ENCODE measurements at regions of chr13 and their contacts with region 1.

Region 1: GRCh38 chr13:94362411-94362909 is 117.0 kb downstream of the DCT start:
- DNase-seq: peak; percentile 28 to 84 (median 58)
- ATAC-seq: peak; percentile 98
- H3K4me3 ChIP-seq: no peak overlapping the region
- H3K4me3 Mint-ChIP-seq: no peak overlapping the region
- H3K27ac ChIP-seq: no peak overlapping the region
- H3K27ac Mint-ChIP-seq: no peak overlapping the region
- H3K4me1 ChIP-seq: no peaks in the 10 kb centered on the region
- H3K4me1 Mint-ChIP-seq: no peaks in the 10 kb centered on the region
- H3K27me3 ChIP-seq: no peaks in the 10 kb centered on the region
- H3K27me3 Mint-ChIP-seq: no peaks in the 10 kb centered on the region
- CTCF ChIP-seq: peak; percentile 83

Region 2: DNA sequence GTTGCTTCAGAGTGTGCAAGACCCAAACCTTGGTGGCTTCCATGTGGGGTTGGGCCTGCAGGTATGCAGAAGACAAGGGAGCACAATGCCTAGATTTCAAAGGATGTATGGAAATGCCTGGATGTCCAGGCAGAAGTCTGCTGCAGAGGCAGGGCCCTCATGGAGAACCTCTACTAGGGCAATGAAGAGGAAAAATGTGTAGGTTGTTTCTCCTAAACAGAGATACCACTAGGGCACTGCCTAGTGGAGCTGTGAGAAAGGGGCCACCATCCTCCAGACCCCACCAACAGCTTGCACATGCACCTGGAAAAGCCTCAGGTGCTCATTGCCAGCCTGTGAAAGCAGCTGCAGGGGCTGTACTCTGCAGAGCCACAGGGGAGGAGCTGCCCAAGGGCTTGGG is 1668.4 kb before region 1 on chr13:
- CTCF ChIA-PET with region 1: no interaction called
- POLR2A ChIA-PET with region 1: no interaction called
- intact Hi-C with region 1: no loop called
- DNase-seq: no peak
- ATAC-seq: no peak
- H3K4me3 ChIP-seq: no peak overlapping the region
- H3K4me3 Mint-ChIP-seq: no peak overlapping the region
- H3K27ac ChIP-seq: no peak overlapping the region
- H3K27ac Mint-ChIP-seq: no peak overlapping the region
- H3K4me1 ChIP-seq: no peaks in the 10 kb centered on the region
- H3K4me1 Mint-ChIP-seq: no peaks in the 10 kb centered on the region
- H3K27me3 ChIP-seq: no peaks in the 10 kb centered on the region
- H3K27me3 Mint-ChIP-seq: no peaks in the 10 kb centered on the region
- CTCF ChIP-seq: no peak

Region 3: GRCh38 chr13:92896842-92897241 is 1465.6 kb before region 1 on chr13:
- CTCF ChIA-PET with region 1: no interaction called
- POLR2A ChIA-PET with region 1: no interaction called
- intact Hi-C with region 1: loop called in 1 of 2 experiments (anchors 10 kb)
- DNase-seq: no peak
- ATAC-seq: no peak
- H3K4me3 ChIP-seq: no peak overlapping the region
- H3K4me3 Mint-ChIP-seq: no peak overlapping the region
- H3K27ac ChIP-seq: no peak overlapping the region
- H3K27ac Mint-ChIP-seq: no peak overlapping the region
- H3K4me1 ChIP-seq: no peaks in the 10 kb centered on the region
- H3K4me1 Mint-ChIP-seq: no peaks in the 10 kb centered on the region
- H3K27me3 ChIP-seq: no peaks in the 10 kb centered on the region
- H3K27me3 Mint-ChIP-seq: no peaks in the 10 kb centered on the region
- CTCF ChIP-seq: no peak

Region 4: GRCh38 chr13:94305463-94305862 is 57.0 kb before region 1 on chr13:
- CTCF ChIA-PET with region 1: no interaction called
- POLR2A ChIA-PET with region 1: no interaction called
- intact Hi-C with region 1: no loop called
- DNase-seq: no peak
- ATAC-seq: no peak
- H3K4me3 ChIP-seq: no peak overlapping the region
- H3K4me3 Mint-ChIP-seq: no peak overlapping the region
- H3K27ac ChIP-seq: no peak overlapping the region
- H3K27ac Mint-ChIP-seq: no peak overlapping the region
- H3K4me1 ChIP-seq: no peaks in the 10 kb centered on the region
- H3K4me1 Mint-ChIP-seq: no peaks in the 10 kb centered on the region
- H3K27me3 ChIP-seq: no peaks in the 10 kb centered on the region
- H3K27me3 Mint-ChIP-seq: no peaks in the 10 kb centered on the region
- CTCF ChIP-seq: no peak

Region 5: DNA sequence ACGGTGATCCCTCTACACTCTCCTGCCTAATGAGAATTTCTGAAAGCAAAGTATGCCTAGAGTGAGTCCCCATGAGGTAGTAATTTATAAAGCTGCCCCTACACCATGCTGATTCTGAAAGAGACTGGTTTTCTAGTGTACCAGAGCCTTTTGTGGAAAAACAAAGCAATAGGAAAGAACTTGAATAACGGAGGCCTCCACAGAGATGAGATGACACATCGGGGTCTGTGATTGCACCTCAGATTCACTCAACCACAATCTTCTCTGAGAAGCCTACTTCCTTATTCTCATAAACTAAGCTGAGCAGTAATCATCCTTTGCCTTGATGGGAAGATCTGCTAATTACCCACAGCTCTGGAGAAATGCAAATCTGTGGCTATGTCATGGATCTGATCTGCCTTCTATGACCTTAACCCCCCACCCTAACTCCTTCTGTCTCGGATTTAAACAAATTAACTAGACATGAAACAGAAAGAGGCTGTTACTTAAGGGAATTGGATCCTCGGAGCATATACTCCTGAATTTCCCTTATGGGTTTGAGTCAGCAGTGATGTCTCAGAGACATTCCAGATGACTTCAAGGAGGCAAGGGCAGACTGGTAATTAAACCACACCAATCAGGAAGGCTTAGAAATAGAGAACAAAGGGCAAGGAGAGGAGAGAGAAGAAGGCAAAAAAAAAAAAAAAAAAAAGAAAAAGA is 11.0 kb before region 1 on chr13:
- CTCF ChIA-PET with region 1: interaction called, 19 read pairs
- POLR2A ChIA-PET with region 1: no interaction called
- intact Hi-C with region 1: no loop called
- DNase-seq: peak in 1 of 9 experiments; percentile 19
- ATAC-seq: no peak
- H3K4me3 ChIP-seq: no peak overlapping the region
- H3K4me3 Mint-ChIP-seq: no peak overlapping the region
- H3K27ac ChIP-seq: no peak overlapping the region
- H3K27ac Mint-ChIP-seq: no peak overlapping the region
- H3K4me1 ChIP-seq: peaks cover 4% of the 10 kb centered on the region
- H3K4me1 Mint-ChIP-seq: peaks cover 8% of the 10 kb centered on the region
- H3K27me3 ChIP-seq: no peaks in the 10 kb centered on the region
- H3K27me3 Mint-ChIP-seq: peaks cover 2% of the 10 kb centered on the region
- CTCF ChIP-seq: no peak